ENCODE measurements at regions of chr12 and their contacts with region 1.

Region 1: DNA sequence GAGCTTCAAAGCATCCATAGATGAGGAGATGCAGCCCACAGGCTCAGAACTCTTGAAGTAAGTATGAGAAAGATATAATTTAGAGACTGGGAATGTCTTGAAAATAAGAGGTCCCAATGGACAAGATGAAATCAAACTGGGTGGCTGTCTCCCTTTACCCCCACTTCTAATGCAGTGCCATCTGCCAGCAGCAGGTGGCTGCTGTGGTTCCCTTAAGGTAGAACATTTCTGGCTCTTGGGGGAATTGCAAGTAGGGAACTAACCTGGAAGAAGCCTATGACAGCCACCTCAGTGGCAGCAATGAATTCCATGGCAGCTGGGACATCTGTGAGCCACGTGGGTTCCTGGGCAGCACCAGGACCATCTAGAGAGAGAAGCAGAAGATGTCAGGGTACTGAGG is 648 bp downstream of the ERP27 start:
- DNase-seq: no peak
- H3K4me3 ChIP-seq: no peak overlapping the region
- H3K27ac ChIP-seq: no peak overlapping the region
- H3K4me1 ChIP-seq: no peaks in the 10 kb centered on the region
- H3K27me3 ChIP-seq: no peaks in the 10 kb centered on the region
- CTCF ChIP-seq: no peak
- POLR2A ChIP-seq: no peak

Region 2: GRCh38 chr12:14884458-14884878 is 53.2 kb before region 1 on chr12:
- intact Hi-C with region 1: no loop called
- DNase-seq: peak; percentile 81 to 89
- H3K4me3 ChIP-seq: peak overlapping the region; percentile 37 to 55
- H3K27ac ChIP-seq: peak overlapping the region; percentile 85 to 95
- H3K4me1 ChIP-seq: no peaks in the 10 kb centered on the region
- H3K27me3 ChIP-seq: no peaks in the 10 kb centered on the region
- CTCF ChIP-seq: no peak
- POLR2A ChIP-seq: peak; percentile 39 to 55

Region 3: DNA sequence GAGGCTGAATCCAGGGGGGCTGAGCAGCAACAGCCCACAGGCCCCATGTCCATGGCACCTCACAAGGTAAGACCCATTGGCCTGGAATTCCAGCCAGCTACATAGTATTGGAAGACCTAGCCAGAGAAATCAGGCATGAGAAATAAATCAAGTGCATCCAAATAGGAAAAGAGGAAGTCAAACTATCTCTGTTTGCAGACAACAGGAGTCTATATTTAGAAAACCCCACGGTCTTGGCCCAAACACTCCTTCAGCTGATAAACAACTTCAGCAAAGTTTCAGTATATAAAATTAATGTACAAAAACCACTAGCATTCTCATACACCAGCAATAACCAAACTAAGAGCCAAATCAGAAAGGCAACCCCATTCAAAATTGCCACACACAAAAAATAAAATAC is 52.1 kb after region 1 on chr12:
- intact Hi-C with region 1: loop called (anchors 10 kb)
- DNase-seq: no peak
- H3K4me3 ChIP-seq: no peak overlapping the region
- H3K27ac ChIP-seq: no peak overlapping the region
- H3K4me1 ChIP-seq: no peaks in the 10 kb centered on the region
- H3K27me3 ChIP-seq: no peaks in the 10 kb centered on the region
- CTCF ChIP-seq: no peak
- POLR2A ChIP-seq: no peak

Measured in uterus (tissue), 4 donors.